Esophagus squamous epithelium (tissue), 5 donors: ENCODE measurements at regions of chr14 and their contacts with region 1.

Region 1: DNA sequence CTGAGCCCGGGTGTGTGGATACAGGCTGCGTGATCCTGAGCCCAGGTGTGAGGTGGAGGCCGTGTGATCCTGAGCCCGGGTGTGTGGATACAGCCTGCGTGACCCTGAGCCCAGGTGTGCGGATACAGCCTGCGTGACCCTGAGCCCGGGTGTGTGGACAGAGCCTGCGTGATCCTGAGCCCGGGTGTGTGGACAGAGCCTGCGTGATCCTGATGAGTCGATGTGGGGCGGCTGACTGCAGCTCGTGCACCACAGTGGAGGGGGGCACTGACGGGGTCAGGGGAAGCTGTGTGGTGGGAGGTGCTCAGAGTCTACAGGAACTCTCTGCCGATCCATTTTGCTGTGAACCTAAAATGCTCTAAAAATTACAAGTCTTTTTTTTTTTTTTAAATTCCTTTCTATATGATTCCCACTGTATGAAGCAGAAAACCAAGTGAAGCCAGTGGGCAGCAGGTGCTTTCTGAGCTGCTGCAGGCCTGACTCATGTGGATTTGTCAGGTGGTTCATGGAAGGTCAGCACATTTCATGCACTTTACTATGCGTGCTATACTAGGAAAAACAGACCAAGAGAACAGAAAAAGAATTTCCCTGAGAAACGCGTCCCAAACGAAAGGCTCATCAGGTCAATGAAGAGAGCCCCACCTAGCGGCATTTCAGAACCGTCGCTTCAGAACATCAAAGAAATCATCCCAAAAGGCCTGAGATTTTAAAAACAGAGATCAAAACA is 19.3 kb downstream of the BRF1 start:
- DNase-seq: no peak
- H3K4me3 ChIP-seq: no peak overlapping the region
- H3K27ac ChIP-seq: no peak overlapping the region
- H3K4me1 ChIP-seq: peaks cover 0 to 17% (median 0%) of the 10 kb centered on the region in 3 donors
- H3K27me3 ChIP-seq: no peaks in the 10 kb centered on the region
- CTCF ChIP-seq: peak in 5 of 6 experiments; percentile 43 to 68 (median 51)
- POLR2A ChIP-seq: no peak

Region 2: GRCh38 chr14:105086833-105087307 is 194.7 kb before region 1 on chr14:
- intact Hi-C with region 1: loop called (anchors 10 kb)
- DNase-seq: no peak
- H3K4me3 ChIP-seq: peak overlapping the region; percentile 19 to 65 (median 46)
- H3K27ac ChIP-seq: peak overlapping the region; percentile 57 to 85 (median 70)
- H3K4me1 ChIP-seq: peaks cover 36 to 65% (median 37%) of the 10 kb centered on the region in 3 donors
- H3K27me3 ChIP-seq: peaks cover 0 to 53% (median 0%) of the 10 kb centered on the region in 4 donors
- CTCF ChIP-seq: peak; percentile 76 to 89 (median 80)
- POLR2A ChIP-seq: no peak

Region 3: GRCh38 chr14:105203057-105203531 is 78.4 kb before region 1 on chr14:
- intact Hi-C with region 1: loop called (anchors 10 kb)
- DNase-seq: no peak
- H3K4me3 ChIP-seq: no peak overlapping the region
- H3K27ac ChIP-seq: no peak overlapping the region
- H3K4me1 ChIP-seq: peaks cover 19 to 69% (median 37%) of the 10 kb centered on the region in 3 donors
- H3K27me3 ChIP-seq: peaks cover 0 to 58% (median 0%) of the 10 kb centered on the region in 4 donors
- CTCF ChIP-seq: peak; percentile 78 to 97 (median 94)
- POLR2A ChIP-seq: no peak

Region 4: DNA sequence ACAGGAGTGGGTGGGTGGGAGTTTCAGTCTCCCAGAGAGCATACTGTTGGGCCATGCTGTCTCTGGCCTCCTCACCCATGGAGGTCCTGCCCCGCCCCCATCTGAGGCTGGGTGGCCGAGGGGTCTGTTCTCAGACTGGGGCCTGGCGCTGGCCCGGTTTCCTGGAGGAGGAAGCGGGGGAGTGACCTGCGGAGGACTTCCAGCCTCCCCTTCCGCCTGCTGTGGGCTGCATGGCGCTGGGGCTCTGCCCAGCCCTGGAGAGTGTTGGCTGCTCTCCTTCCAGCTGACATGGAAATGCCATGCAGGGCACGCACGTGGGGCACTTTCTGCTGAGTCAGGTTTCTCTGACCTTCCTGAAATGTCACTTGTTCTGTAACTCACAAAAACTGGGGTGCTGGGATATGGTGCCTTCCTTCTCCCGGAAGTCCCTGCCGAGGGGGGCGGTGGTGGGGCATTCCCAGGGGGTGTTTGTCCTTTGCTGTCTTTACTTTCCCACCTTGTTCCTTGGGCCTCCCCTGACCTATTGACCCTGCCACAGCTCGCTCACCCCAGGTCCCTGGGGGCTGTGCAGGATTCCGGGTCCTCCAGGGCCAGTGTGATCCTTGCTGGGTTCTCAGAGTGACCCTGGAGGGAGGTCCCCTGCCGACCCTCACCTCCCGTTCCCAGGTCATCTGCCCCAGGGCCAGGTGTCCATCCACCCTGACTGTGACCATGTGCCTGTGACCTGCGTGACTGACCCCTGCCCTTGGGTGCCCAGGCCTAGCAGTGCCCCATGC is 56.6 kb after region 1 on chr14:
- intact Hi-C with region 1: loop called (anchors 5 kb)
- DNase-seq: no peak
- H3K4me3 ChIP-seq: no peak overlapping the region
- H3K27ac ChIP-seq: peak overlapping the region in 1 of 4 donors; percentile 17
- H3K4me1 ChIP-seq: peaks cover 8 to 61% (median 18%) of the 10 kb centered on the region in 3 donors
- H3K27me3 ChIP-seq: no peaks in the 10 kb centered on the region
- CTCF ChIP-seq: no peak
- POLR2A ChIP-seq: no peak

Region 5: DNA sequence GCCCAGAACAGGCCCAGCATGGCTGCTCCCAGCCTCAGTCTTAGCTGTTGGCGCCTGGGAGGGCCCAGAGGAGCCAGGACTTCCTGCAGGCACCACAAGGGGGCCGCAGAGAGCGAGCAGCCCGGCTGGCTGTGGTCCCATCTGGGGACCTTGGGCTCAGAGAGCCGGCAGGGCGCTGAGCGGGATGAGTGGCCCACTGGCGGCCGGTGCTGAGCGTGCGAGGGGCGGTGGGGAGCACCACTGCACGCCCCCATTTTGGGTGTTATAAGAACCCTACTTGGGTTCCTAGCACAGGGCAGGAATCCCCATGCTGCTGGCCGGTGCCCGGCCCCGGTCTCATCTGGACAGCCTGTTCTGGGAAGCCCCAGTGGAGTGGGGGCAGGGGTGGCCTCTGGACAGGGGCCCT is 167.2 kb after region 1 on chr14:
- intact Hi-C with region 1: no loop called
- DNase-seq: no peak
- H3K4me3 ChIP-seq: no peak overlapping the region
- H3K27ac ChIP-seq: peak overlapping the region in 2 of 4 donors; percentile 14 to 26
- H3K4me1 ChIP-seq: peaks cover 0 to 14% (median 0%) of the 10 kb centered on the region in 3 donors
- H3K27me3 ChIP-seq: no peaks in the 10 kb centered on the region
- CTCF ChIP-seq: peak; percentile 81 to 91 (median 86)
- POLR2A ChIP-seq: no peak